ENCODE measurements at regions of chr1 and their contacts with region 1.

Region 1: DNA sequence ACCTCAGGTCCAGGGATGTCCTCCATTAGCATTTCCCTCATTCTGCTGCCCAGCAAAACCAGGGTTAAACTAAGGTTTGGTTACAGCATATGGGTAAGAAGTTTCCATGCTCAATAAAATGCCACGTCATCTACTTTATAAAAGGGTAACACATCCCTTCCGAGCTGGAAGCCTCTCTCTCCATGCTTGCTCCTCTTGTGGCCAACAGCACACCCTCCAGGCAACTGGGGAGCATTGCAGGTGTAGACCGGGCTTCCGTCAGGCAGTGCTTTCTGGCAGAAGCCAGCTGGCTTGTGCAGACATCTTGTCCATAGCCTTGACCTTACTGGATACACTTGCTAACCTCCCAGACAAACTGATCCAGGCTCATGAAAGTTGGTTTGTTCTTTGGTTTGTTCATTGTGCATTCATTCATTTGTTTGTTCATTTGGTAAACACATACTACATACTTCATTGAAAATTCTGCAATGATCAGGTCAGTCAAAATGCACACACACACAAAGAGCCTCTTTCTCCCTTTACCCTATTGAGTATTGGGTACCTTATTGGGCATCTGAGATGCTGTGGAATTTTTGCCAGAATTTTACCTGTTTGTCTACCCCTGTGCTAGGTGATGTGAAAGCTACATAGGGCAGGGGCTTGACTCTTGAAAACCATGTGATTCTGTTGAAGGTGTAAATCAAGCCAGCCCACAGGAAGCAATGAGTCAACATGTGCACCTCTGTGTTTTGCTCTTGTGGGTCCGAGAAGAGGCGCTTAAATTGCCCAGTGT is 422.8 kb downstream of the CAMTA1 start:
- DNase-seq: peak; percentile 25
- ATAC-seq: peak; percentile 86
- H3K4me3 ChIP-seq: no peak overlapping the region
- H3K27ac ChIP-seq: no peak overlapping the region
- H3K4me1 ChIP-seq: no peaks in the 10 kb centered on the region
- H3K27me3 ChIP-seq: no peaks in the 10 kb centered on the region; a peak in 1 of 5 replicates
- CTCF ChIP-seq: peak; percentile 86
- EP300 ChIP-seq: no peak
- POLR2A ChIP-seq: no peak
- RAD21 ChIP-seq: peak; percentile 74

Region 2: GRCh38 chr1:6570100-6570499 is 638.0 kb before region 1 on chr1:
- CTCF ChIA-PET with region 1: no interaction called
- POLR2A ChIA-PET with region 1: no interaction called
- in situ Hi-C with region 1: no loop called
- intact Hi-C with region 1: no loop called
- DNase-seq: no peak
- ATAC-seq: no peak
- H3K4me3 ChIP-seq: no peak overlapping the region
- H3K27ac ChIP-seq: no peak overlapping the region
- H3K4me1 ChIP-seq: peaks cover 20% of the 10 kb centered on the region
- H3K27me3 ChIP-seq: peaks cover 1 to 15% of the 10 kb centered on the region in 2 experiments; a peak in 3 of 5 replicates
- CTCF ChIP-seq: no peak
- EP300 ChIP-seq: no peak
- POLR2A ChIP-seq: no peak
- RAD21 ChIP-seq: no peak

Region 3: DNA sequence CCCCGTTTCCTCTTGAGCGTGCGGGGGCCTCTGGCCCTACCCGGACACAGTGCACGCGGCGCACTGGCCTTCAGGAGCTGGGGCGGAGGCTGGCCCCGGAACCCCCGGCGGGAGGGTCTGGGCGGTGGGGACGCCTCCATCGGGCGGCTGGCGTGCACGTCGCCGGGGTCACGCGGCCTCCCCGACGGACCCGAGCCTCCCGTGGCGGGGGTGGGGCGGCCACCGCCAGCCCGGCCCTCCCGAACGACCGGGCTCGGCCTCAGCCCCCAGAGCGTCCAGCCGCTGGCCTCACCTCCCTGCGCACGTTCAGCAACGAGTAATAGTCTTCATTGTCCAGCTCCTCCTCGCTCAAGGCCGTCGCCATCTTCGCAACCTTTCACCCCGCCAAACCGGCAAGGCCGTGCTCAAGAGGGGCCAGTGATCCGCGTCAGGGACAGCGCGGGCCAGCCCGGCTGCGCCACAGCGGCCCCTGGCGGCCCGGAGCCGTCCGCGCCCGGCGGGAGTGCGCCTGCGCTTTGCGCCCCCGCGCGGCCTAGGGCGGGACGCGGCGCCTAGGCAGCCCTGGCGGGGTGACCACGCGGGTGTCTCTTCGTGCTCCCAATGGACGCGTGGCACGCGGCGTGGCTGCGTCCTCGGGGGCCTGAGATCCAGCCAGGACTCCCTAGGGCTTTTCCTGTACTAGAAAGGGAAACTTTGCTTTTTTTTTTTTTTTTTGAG is 506.5 kb before region 1 on chr1 and contains the start of gene DNAJC11:
- CTCF ChIA-PET with region 1: no interaction called
- POLR2A ChIA-PET with region 1: no interaction called
- in situ Hi-C with region 1: loop called (anchors 25 kb)
- intact Hi-C with region 1: no loop called
- DNase-seq: peak; percentile 80
- ATAC-seq: peak; percentile 91
- H3K4me3 ChIP-seq: peak within 1 kb of the TSS; percentile 93 to 99 (median 99)
- H3K27ac ChIP-seq: peak within 1 kb of the TSS; percentile 96
- H3K4me1 ChIP-seq: peaks cover 23% of the 10 kb centered on the region
- H3K27me3 ChIP-seq: no peaks in the 10 kb centered on the region; a peak in 1 of 5 replicates
- CTCF ChIP-seq: peak; percentile 87
- EP300 ChIP-seq: peak in 1 of 2 experiments; percentile 54; a peak in 1 of 4 replicates
- POLR2A ChIP-seq: peak; percentile 79 to 95
- RAD21 ChIP-seq: peak; percentile 48
- total RNA-seq, gene DNAJC11: 47.6 and 56.8 TPM in 2 replicates

Region 4: GRCh38 chr1:7042322-7043190 is 165.5 kb before region 1 on chr1:
- CTCF ChIA-PET with region 1: interaction called, 5 read pairs
- POLR2A ChIA-PET with region 1: no interaction called
- in situ Hi-C with region 1: no loop called
- intact Hi-C with region 1: loop called (anchors 1 kb)
- DNase-seq: peak; percentile 12
- ATAC-seq: peak; percentile 31; the same call in 2 of the 3 replicates
- H3K4me3 ChIP-seq: no peak overlapping the region
- H3K27ac ChIP-seq: no peak overlapping the region
- H3K4me1 ChIP-seq: no peaks in the 10 kb centered on the region
- H3K27me3 ChIP-seq: peaks cover 1 to 22% of the 10 kb centered on the region in 2 experiments; a peak in 3 of 5 replicates
- CTCF ChIP-seq: peak; percentile 54
- EP300 ChIP-seq: no peak
- POLR2A ChIP-seq: no peak
- RAD21 ChIP-seq: no peak

Region 5: GRCh38 chr1:7150724-7151280 is 57.3 kb before region 1 on chr1:
- CTCF ChIA-PET with region 1: no interaction called
- POLR2A ChIA-PET with region 1: no interaction called
- in situ Hi-C with region 1: no loop called
- intact Hi-C with region 1: no loop called
- DNase-seq: no peak
- ATAC-seq: no peak
- H3K4me3 ChIP-seq: no peak overlapping the region
- H3K27ac ChIP-seq: no peak overlapping the region
- H3K4me1 ChIP-seq: peaks cover 10% of the 10 kb centered on the region
- H3K27me3 ChIP-seq: peaks cover 2 to 10% of the 10 kb centered on the region in 2 experiments; a peak in 3 of 5 replicates
- CTCF ChIP-seq: no peak
- EP300 ChIP-seq: no peak
- POLR2A ChIP-seq: no peak
- RAD21 ChIP-seq: no peak

Measured in HepG2 (cell line).